GM13977 (cell line): ENCODE measurements at regions of chr10 and their contacts with region 1.

Region 1: GRCh38 chr10:118241229-118242137 is 100.6 kb downstream of the FAM204A start:
- DNase-seq: peak; percentile 51
- CTCF ChIP-seq: peak; percentile 95

Region 2: DNA sequence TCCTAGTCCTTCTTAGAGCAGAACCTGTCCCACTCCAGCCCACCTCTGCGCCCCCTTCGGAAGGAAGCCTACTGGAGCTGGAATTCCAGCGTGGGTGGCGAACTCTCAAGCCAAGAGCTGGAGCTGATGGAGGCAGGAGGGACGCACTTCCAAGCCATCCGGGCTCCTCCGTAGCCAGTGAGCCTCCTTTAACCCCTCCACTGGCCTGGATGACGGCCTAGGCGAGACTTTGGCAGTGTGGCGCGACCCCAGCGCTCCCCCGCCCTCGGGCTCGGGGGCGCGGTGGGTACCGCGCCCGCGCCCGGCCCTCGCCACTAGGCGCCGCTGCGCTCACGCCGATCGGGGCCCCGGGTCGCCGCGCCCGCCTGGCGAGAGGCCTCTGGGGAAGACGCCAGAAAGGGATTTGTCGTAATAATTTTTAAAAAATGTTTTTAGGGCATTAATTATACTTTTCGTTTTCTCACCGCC is 704.0 kb before region 1 on chr10:
- in situ Hi-C with region 1: loop called (anchors 25 kb)
- DNase-seq: peak; percentile 77
- CTCF ChIP-seq: peak; percentile 73

Region 3: DNA sequence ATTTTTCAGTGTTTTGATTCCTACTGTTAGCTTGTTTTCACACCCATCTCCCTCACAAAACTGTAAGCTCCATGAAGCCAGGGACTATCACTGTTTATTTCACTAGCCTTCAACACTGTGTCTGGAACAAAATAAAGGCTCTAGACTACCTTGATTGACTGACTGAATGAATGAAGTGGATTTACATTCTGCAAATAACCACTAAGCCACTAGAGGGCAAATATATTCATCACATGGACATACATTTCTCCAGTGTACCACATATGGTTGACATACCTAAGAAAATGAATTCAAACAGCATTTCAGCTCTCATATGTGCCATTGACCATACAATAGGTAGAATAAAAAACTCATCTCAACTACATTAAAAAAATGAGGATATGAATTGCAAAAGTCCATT is 380.7 kb before region 1 on chr10:
- in situ Hi-C with region 1: loop called (anchors 25 kb)
- DNase-seq: peak; percentile 29
- CTCF ChIP-seq: peak; percentile 48